ENCODE measurements at regions of chr20 and their contacts with region 1.

Region 1: GRCh38 chr20:324177-325044 is 941 bp upstream of the SOX12 start:
- DNase-seq: peak; percentile 93 to 94
- ATAC-seq: peak; percentile 88 to 94 (median 90)
- H3K4me3 ChIP-seq: peak overlapping the region; percentile 70
- H3K27ac ChIP-seq: peak overlapping the region; percentile 79
- H3K4me1 ChIP-seq: peaks cover 5% of the 10 kb centered on the region
- H3K27me3 ChIP-seq: no peaks in the 10 kb centered on the region
- CTCF ChIP-seq: peak; percentile 27

Region 2: GRCh38 chr20:297098-297924 is 27.1 kb before region 1 on chr20 and contains the start of gene ZCCHC3:
- intact Hi-C with region 1: loop called in 1 of 2 experiments (anchors 1 kb)
- DNase-seq: peak; percentile 92 to 95
- ATAC-seq: peak; percentile 86 to 92 (median 88)
- H3K4me3 ChIP-seq: peak within 1 kb of the TSS; percentile 99
- H3K27ac ChIP-seq: peak within 1 kb of the TSS; percentile 96
- H3K4me1 ChIP-seq: peaks cover 33% of the 10 kb centered on the region
- H3K27me3 ChIP-seq: no peaks in the 10 kb centered on the region
- CTCF ChIP-seq: peak; percentile 21
- total RNA-seq, gene ZCCHC3: 9.3 to 10.2 (median 9.5) TPM

Region 3: GRCh38 chr20:401682-402495 is 77.5 kb after region 1 on chr20:
- intact Hi-C with region 1: no loop called
- DNase-seq: no peak
- ATAC-seq: no peak
- H3K4me3 ChIP-seq: no peak overlapping the region
- H3K27ac ChIP-seq: no peak overlapping the region
- H3K4me1 ChIP-seq: peaks cover 1% of the 10 kb centered on the region
- H3K27me3 ChIP-seq: no peaks in the 10 kb centered on the region
- CTCF ChIP-seq: no peak